ENCODE measurements at regions of chr4 and their contacts with region 1.

Region 1: GRCh38 chr4:3871181-3871871 is 105.1 kb downstream of the ADRA2C start:
- DNase-seq: peak in 1 of 2 donors; percentile 45
- H3K4me3 ChIP-seq: no peak overlapping the region
- H3K27ac ChIP-seq: no peak overlapping the region
- H3K4me1 ChIP-seq: peaks cover 0 to 14% (median 2%) of the 10 kb centered on the region in 4 donors
- H3K27me3 ChIP-seq: peaks cover 0 to 92% of the 10 kb centered on the region in 2 donors
- CTCF ChIP-seq: no peak

Region 2: GRCh38 chr4:3563403-3563802 is 307.9 kb before region 1 on chr4:
- intact Hi-C with region 1: loop called (anchors 10 kb)
- DNase-seq: peak in 1 of 2 donors; percentile 33
- H3K4me3 ChIP-seq: no peak overlapping the region
- H3K27ac ChIP-seq: no peak overlapping the region
- H3K4me1 ChIP-seq: no peaks in the 10 kb centered on the region
- H3K27me3 ChIP-seq: peaks cover 0 to 4% of the 10 kb centered on the region in 2 donors
- CTCF ChIP-seq: no peak

Measured in tibial artery (tissue), 4 donors.